Activated CD4-positive, alpha-beta memory T cell treated with anti-CD3 and anti-CD28 coated beads, Interleukin-2, amount 10 ng/mL, durations not matched to agents 7 days and 5 days (primary cell): ENCODE measurements at regions of chr18 and their contacts with region 1.

Region 1: GRCh38 chr18:13159579-13159978 is 59.0 kb upstream of the LDLRAD4 start:
- DNase-seq: no peak
- H3K4me3 Mint-ChIP-seq: no peak overlapping the region
- H3K27ac Mint-ChIP-seq: no peak overlapping the region
- H3K4me1 Mint-ChIP-seq: peaks cover 3% of the 10 kb centered on the region
- H3K27me3 Mint-ChIP-seq: peaks cover 22% of the 10 kb centered on the region

Region 2: DNA sequence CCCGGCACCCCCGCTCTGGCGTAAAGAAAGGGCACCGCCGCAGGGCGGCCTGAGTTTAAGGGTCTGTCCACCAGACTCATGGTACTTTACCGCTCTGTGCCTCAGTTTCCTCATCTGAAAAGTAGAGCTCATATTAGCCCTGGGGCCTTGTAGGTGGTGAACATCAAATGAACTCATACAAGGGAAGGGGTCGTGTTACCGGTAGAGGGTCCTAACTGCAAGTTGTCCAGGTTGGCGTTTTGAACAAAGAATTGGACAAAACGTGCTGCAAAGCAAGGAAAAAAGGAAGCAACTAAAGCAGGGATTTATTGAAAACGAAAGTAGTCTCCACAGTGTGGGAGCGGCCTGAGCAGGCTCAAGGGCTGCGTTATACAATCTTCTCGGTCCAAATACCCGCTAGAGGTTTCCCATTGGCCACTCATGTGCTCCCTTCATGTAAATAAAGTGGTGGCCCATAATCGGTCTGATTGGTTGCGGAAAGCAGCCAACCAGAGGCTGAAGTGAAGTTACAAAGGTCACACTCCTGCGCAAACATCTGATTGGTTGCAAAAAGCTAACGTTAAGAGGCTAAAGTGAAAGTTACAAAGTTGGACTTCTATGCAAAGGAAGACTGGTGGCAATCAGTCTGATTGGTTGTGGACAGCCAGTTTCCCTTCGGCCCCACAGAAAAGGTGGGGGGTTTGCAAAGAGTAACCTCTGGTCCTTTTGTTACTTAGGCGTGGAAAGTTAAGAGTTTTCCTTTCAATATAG is 21.7 kb before region 1 on chr18:
- CTCF ChIA-PET with region 1: interaction called, 11 read pairs
- POLR2A ChIA-PET with region 1: no interaction called
- DNase-seq: peak; percentile 85
- H3K4me3 Mint-ChIP-seq: peak overlapping the region; percentile 86
- H3K27ac Mint-ChIP-seq: peak overlapping the region; percentile 75
- H3K4me1 Mint-ChIP-seq: peaks cover 30% of the 10 kb centered on the region
- H3K27me3 Mint-ChIP-seq: peaks cover 13% of the 10 kb centered on the region

Region 3: DNA sequence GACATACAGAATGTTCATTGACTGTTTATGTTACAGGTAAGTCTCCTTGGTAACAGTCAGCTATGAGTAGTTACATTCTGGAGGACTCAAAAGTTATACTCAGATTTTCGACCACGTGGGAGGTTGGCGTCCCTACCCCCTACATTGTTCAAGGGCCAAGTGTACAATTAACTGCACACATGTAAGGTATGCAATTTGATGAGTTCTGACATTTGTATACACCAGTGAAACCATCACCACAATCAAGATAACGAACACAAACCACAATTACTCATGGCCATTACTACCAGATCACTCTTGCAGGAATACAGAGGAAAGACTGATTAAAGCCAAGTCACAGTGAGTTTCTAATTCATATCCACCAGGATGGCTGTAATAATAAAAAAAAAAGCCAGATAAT is 19.4 kb after region 1 on chr18:
- CTCF ChIA-PET with region 1: interaction called, 13 read pairs
- POLR2A ChIA-PET with region 1: interaction called, 3 read pairs
- DNase-seq: no peak
- H3K4me3 Mint-ChIP-seq: no peak overlapping the region
- H3K27ac Mint-ChIP-seq: no peak overlapping the region
- H3K4me1 Mint-ChIP-seq: peaks cover 38% of the 10 kb centered on the region
- H3K27me3 Mint-ChIP-seq: peaks cover 23% of the 10 kb centered on the region